CD4-positive, alpha-beta T cell (primary cell): ENCODE measurements at regions of chr11 and their contacts with region 1.

Region 1: DNA sequence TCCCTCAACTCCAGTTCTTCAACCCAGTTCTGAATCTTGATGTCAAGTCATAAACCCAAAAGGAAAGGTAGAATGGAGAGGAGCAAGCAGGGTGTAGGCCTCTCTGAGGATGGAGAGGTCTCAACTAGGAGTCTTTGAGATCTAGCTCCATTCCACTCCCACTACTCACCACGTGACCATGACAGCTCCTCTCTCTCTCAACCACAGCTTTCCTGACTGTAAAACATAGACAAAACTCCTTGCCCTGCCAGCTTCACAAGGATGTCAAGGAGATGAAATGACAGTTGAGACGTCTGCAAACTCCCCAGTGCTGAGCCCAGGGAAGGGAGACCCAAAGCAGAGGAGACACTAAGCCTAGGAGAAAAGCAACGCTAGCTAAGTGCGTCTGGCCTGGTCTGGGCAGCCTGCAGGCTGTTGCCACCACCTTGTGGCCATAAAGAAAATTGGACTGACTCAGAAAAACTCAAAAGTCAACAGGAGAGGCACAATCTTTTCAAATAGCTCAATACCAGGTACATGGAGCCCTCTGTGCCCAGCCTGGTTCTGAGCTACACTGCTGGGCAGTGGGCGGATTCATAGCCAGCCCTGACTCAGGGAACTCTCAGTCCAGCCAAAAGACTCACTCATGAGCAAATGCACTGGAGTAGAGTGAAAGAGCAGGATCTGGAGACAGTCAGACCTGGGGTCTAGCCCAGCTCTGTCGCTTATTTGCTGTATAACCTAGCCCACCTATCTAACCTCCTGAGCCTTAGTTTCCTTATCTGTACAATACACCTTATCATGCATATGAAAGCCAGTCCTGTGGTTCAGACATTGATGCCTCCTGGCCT is 3.4 kb downstream of the CLPB start:
- DNase-seq: peak in 12 of 14 experiments; percentile 9 to 74 (median 18)
- ATAC-seq: peak; percentile 16
- H3K4me3 ChIP-seq: no peak overlapping the region
- H3K4me3 Mint-ChIP-seq: peak overlapping the region; percentile 7
- H3K27ac ChIP-seq: no peak overlapping the region
- H3K27ac Mint-ChIP-seq: peak overlapping the region; percentile 58
- H3K4me1 ChIP-seq: peaks cover 24% of the 10 kb centered on the region
- H3K4me1 Mint-ChIP-seq: peaks cover 44% of the 10 kb centered on the region
- H3K27me3 ChIP-seq: no peaks in the 10 kb centered on the region
- H3K27me3 Mint-ChIP-seq: no peaks in the 10 kb centered on the region
- CTCF ChIP-seq: peak; percentile 67

Region 2: GRCh38 chr11:71977743-71978418 is 453.1 kb before region 1 on chr11:
- CTCF ChIA-PET with region 1: interaction called, 4 read pairs
- POLR2A ChIA-PET with region 1: no interaction called
- intact Hi-C with region 1: loop called (anchors 5 kb)
- DNase-seq: peak; percentile 20 to 75 (median 40)
- ATAC-seq: peak; percentile 62
- H3K4me3 ChIP-seq: no peak overlapping the region
- H3K4me3 Mint-ChIP-seq: no peak overlapping the region
- H3K27ac ChIP-seq: no peak overlapping the region
- H3K27ac Mint-ChIP-seq: no peak overlapping the region
- H3K4me1 ChIP-seq: no peaks in the 10 kb centered on the region
- H3K4me1 Mint-ChIP-seq: no peaks in the 10 kb centered on the region
- H3K27me3 ChIP-seq: no peaks in the 10 kb centered on the region
- H3K27me3 Mint-ChIP-seq: no peaks in the 10 kb centered on the region
- CTCF ChIP-seq: peak; percentile 72

Region 3: GRCh38 chr11:72091005-72091691 is 339.8 kb before region 1 on chr11:
- CTCF ChIA-PET with region 1: no interaction called
- POLR2A ChIA-PET with region 1: no interaction called
- intact Hi-C with region 1: loop called in 1 of 2 experiments (anchors 5 kb)
- DNase-seq: peak; percentile 56 to 85 (median 72)
- ATAC-seq: peak; percentile 100
- H3K4me3 ChIP-seq: no peak overlapping the region
- H3K4me3 Mint-ChIP-seq: no peak overlapping the region
- H3K27ac ChIP-seq: no peak overlapping the region
- H3K27ac Mint-ChIP-seq: peak overlapping the region; percentile 73
- H3K4me1 ChIP-seq: peaks cover 5% of the 10 kb centered on the region
- H3K4me1 Mint-ChIP-seq: peaks cover 14% of the 10 kb centered on the region
- H3K27me3 ChIP-seq: no peaks in the 10 kb centered on the region
- H3K27me3 Mint-ChIP-seq: no peaks in the 10 kb centered on the region
- CTCF ChIP-seq: peak; percentile 86

Region 4: DNA sequence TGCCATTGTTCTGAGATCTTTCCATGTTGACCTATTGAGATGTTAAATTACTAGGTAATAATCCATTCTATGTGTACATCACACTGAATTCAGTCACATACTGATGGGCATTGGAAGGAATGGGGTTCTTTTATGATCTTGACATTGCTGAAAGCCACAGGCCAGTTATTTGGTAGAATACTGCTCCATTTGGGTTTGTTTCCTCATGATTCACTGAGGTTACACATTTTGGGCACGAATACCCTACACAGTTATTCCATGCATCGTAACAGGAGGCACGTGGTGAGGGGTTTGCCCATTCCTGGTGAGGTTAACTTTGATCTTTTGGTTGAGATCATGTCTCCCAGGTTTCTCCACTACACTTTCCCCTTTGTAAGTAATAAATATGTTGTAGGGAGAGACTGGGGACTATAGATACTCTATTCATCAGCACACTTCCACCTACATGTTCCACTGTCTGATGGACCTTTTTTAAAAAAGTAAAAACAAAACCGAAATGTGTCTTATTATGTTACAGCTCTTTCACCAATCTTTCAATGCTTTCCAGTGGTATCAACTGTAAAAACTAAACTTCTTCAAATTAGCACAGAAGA is 251.1 kb before region 1 on chr11:
- CTCF ChIA-PET with region 1: no interaction called
- POLR2A ChIA-PET with region 1: no interaction called
- intact Hi-C with region 1: loop called in 1 of 2 experiments (anchors 1 kb)
- DNase-seq: no peak
- ATAC-seq: no peak
- H3K4me3 ChIP-seq: no peak overlapping the region
- H3K4me3 Mint-ChIP-seq: no peak overlapping the region
- H3K27ac ChIP-seq: no peak overlapping the region
- H3K27ac Mint-ChIP-seq: no peak overlapping the region
- H3K4me1 ChIP-seq: no peaks in the 10 kb centered on the region
- H3K4me1 Mint-ChIP-seq: no peaks in the 10 kb centered on the region
- H3K27me3 ChIP-seq: no peaks in the 10 kb centered on the region
- H3K27me3 Mint-ChIP-seq: peaks cover 11% of the 10 kb centered on the region
- CTCF ChIP-seq: no peak

Region 5: DNA sequence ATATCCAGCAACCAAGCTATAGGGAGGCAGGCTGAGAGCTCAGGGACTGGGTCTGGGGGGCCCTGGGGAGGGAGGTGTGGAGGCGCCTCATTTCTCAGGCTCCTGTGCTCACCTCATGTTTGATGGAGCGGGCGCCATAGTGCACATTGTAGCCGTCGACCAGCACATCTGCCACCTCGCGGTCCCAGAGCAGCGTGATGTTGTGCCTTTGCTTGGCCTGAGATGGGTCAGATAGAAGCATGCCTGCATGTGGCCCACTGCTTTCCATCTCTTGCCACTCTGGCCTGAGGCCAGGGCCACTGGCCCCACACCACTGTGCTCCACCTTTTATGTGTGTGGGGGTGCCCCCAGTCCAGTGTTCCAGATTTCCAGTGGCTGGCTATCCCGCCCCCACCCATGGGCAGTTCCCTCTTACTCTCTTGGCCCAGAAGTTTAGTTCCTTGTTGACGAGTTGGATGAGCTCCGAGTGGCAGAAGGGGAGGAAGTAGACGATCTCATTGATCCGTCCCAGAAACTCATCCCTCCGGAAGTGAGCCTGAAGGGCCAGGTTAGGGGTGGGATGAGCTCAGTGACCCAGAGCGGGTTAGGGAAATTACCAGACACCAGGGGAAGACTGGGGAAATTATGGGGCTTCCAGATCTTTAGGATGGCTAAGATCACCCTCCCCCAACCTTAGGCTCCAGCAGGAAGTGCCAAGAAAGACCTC is 136.9 kb before region 1 on chr11:
- CTCF ChIA-PET with region 1: no interaction called
- POLR2A ChIA-PET with region 1: no interaction called
- intact Hi-C with region 1: loop called (anchors 2 to 5 kb)
- DNase-seq: no peak
- ATAC-seq: no peak
- H3K4me3 ChIP-seq: no peak overlapping the region
- H3K4me3 Mint-ChIP-seq: no peak overlapping the region
- H3K27ac ChIP-seq: no peak overlapping the region
- H3K27ac Mint-ChIP-seq: no peak overlapping the region
- H3K4me1 ChIP-seq: no peaks in the 10 kb centered on the region
- H3K4me1 Mint-ChIP-seq: no peaks in the 10 kb centered on the region
- H3K27me3 ChIP-seq: no peaks in the 10 kb centered on the region
- H3K27me3 Mint-ChIP-seq: no peaks in the 10 kb centered on the region
- CTCF ChIP-seq: no peak

Region 6: DNA sequence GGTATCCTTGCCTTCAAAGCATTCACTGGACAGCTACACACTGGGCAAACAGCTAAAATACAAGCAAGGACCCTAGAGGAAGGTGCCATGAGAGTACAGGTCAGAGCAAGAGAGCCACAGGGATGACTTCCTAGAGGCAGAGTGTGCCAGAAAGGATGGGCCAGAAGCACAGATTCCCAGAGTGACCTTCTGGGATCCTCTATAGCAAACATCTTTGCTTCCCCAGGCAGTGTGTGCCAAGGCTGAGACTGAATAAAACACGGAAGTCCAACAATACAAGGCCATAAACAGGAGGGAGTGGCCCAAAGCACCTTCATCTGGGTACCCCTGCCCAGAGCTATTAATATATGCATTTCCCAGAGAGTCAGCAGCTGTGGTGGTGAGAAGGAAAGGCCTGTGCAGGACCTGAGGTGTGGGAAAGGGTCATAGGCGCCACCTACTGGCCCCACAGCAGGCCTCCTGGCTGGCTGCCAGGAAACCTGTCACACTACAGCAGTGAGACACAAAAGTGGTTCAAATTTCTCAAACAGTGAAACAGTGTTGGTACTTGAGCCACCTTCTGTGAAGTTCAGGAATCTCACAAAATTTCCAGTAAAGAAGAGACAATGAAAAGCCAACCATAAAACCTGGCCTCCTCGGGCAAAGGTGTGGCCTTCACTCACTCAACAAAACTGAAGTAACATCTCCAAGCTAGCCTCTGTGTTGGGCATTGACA is 16.9 kb before region 1 on chr11:
- CTCF ChIA-PET with region 1: interaction called, 19 read pairs
- POLR2A ChIA-PET with region 1: interaction called, 9 read pairs
- intact Hi-C with region 1: no loop called
- DNase-seq: peak; percentile 63 to 85 (median 70)
- ATAC-seq: peak; percentile 72
- H3K4me3 ChIP-seq: no peak overlapping the region
- H3K4me3 Mint-ChIP-seq: no peak overlapping the region
- H3K27ac ChIP-seq: no peak overlapping the region
- H3K27ac Mint-ChIP-seq: no peak overlapping the region
- H3K4me1 ChIP-seq: peaks cover 18% of the 10 kb centered on the region
- H3K4me1 Mint-ChIP-seq: peaks cover 41% of the 10 kb centered on the region
- H3K27me3 ChIP-seq: no peaks in the 10 kb centered on the region
- H3K27me3 Mint-ChIP-seq: no peaks in the 10 kb centered on the region
- CTCF ChIP-seq: peak; percentile 88

Region 7: GRCh38 chr11:72556433-72556832 is 125.5 kb after region 1 on chr11:
- CTCF ChIA-PET with region 1: no interaction called
- POLR2A ChIA-PET with region 1: no interaction called
- intact Hi-C with region 1: no loop called
- DNase-seq: no peak
- ATAC-seq: no peak
- H3K4me3 ChIP-seq: no peak overlapping the region
- H3K4me3 Mint-ChIP-seq: no peak overlapping the region
- H3K27ac ChIP-seq: no peak overlapping the region
- H3K27ac Mint-ChIP-seq: no peak overlapping the region
- H3K4me1 ChIP-seq: peaks cover 4% of the 10 kb centered on the region
- H3K4me1 Mint-ChIP-seq: no peaks in the 10 kb centered on the region
- H3K27me3 ChIP-seq: no peaks in the 10 kb centered on the region
- H3K27me3 Mint-ChIP-seq: peaks cover 20% of the 10 kb centered on the region
- CTCF ChIP-seq: no peak

Region 8: DNA sequence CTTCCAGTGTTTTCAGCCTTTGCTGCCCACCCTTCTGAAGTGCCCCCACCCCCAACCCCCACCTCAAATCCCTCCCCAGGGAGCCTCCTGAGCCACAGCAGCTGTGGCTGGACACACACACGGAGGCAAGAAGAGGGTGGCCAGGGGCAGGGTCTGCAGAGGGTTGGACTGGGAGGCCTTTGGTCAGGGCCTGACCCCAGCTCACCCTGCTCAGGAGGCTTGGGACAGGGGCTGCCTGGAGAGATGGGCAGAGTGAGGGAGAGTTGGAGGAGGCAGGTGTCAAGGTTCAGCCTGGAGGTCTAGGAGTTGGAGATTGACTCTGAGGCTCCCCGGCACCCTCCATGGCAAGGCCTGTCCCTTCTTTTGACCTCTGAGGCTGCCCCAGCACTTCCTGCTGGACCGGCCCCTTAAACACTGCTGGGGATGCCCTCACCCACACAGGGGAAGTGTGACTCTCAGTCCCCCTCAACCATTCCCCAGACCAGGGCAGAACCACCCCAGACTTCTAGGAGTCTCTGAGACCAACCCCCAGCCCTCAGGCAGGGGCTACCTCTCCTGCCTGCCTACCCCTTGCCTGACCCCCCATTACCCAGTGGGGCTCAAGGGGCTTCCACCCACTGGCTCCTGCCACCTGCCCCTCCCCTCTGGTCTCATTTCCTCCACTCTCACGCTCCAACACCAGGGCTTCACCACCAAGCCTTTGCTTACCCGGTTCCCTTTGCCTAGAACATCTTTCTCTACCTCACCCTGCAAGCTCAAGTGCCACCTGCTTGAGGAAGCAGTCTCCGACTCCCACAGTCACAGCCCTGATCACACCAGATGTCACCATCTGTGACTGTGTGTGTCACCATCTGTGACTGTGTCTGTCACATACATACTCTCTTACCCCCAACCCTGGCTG is 312.6 kb after region 1 on chr11:
- CTCF ChIA-PET with region 1: no interaction called
- POLR2A ChIA-PET with region 1: no interaction called
- intact Hi-C with region 1: no loop called
- DNase-seq: peak in 3 of 14 experiments; percentile 29 to 66 (median 57)
- ATAC-seq: peak; percentile 63
- H3K4me3 ChIP-seq: no peak overlapping the region
- H3K4me3 Mint-ChIP-seq: no peak overlapping the region
- H3K27ac ChIP-seq: peak overlapping the region in 1 of 2 donors; percentile 48
- H3K27ac Mint-ChIP-seq: peak overlapping the region; percentile 95
- H3K4me1 ChIP-seq: peaks cover 68% of the 10 kb centered on the region
- H3K4me1 Mint-ChIP-seq: peaks cover 72% of the 10 kb centered on the region
- H3K27me3 ChIP-seq: no peaks in the 10 kb centered on the region
- H3K27me3 Mint-ChIP-seq: no peaks in the 10 kb centered on the region
- CTCF ChIP-seq: no peak

Region 9: DNA sequence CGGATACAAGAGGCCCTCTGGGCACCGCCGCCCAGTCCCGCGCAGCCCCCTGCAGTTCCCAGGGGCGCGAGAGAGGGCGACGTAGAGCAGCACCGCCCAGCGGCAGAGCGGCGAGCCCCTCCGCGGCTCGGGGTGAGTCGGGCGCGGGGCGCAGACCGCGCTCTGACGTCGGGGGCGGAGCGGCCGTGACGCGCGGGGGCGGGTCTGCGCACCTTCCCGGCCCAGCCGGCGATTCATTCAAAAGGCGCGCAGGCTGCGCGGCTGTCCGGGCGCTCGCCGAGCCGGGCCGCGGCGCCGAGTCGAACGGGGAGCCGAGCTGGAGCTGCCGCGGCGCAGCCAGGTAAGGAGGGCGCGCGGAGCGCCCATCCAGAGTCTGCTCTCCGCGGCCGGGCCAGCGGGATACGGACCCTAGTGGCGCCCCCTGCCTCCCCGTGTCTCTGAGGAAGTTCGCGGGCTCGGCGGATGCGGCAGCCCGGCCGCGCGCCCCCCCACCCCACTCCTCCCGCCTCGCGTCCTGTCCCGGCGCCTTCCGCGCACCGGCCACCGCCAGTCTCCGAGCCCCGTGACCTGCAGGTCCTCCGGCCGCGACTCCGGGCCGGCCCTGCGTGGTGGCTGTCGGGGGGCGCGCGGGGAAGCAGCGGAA is 945.3 kb after region 1 on chr11 and contains the start of gene RELT:
- CTCF ChIA-PET with region 1: no interaction called
- POLR2A ChIA-PET with region 1: no interaction called
- intact Hi-C with region 1: loop called in 1 of 2 experiments (anchors 10 kb)
- DNase-seq: peak; percentile 79 to 97 (median 93)
- ATAC-seq: peak; percentile 94
- H3K4me3 ChIP-seq: peak within 1 kb of the TSS; percentile 84
- H3K4me3 Mint-ChIP-seq: peak within 1 kb of the TSS; percentile 93
- H3K27ac ChIP-seq: peak within 1 kb of the TSS; percentile 78 to 91
- H3K27ac Mint-ChIP-seq: peak within 1 kb of the TSS; percentile 88
- H3K4me1 ChIP-seq: peaks cover 58% of the 10 kb centered on the region
- H3K4me1 Mint-ChIP-seq: peaks cover 42% of the 10 kb centered on the region
- H3K27me3 ChIP-seq: no peaks in the 10 kb centered on the region
- H3K27me3 Mint-ChIP-seq: no peaks in the 10 kb centered on the region
- CTCF ChIP-seq: peak; percentile 86
- total RNA-seq, gene RELT: 107 to 114 TPM